K562 (cell line): ENCODE measurements at regions of chrX and their contacts with region 1.

Region 1: DNA sequence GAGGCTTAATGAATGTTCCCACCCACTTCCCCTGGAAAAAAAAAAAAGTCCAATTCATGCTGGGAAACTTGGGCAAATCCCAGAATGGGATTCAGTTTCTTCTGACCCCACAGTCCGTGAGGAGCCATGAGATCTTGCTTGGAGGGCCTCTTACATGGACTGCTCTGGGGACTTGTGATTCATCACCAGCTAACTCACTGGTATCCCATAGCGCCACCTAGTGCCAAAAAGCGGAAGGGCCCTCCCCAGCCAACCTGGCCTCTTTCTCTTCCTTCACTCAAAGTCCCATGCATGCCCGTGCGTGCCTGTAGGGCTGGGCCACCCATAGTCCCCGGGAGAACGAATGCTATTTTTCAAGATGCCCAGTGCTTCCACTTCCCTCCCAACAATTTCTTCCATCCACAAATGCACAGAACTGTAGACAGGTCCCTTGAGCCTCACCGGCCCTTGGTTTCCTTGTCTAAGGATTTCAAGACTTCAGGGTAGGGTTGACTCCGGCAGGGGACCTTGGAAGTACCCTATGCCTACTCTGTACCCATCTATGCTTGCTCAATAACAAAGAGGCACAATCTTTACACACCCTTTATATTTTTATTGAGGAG is 5.1 kb downstream of the RTL5 start:
- DNase-seq: peak; percentile 73 to 78 (median 76)
- ATAC-seq: peak; percentile 95
- H3K4me3 ChIP-seq: no peak overlapping the region
- H3K27ac ChIP-seq: no peak overlapping the region
- H3K4me1 ChIP-seq: peaks cover 0 to 5% of the 10 kb centered on the region in 2 experiments; a peak in 2 of 5 replicates
- H3K27me3 ChIP-seq: peaks cover 0 to 30% of the 10 kb centered on the region in 2 experiments; a peak in 3 of 5 replicates
- CTCF ChIP-seq: peak; percentile 68 to 82 (median 81)
- EP300 ChIP-seq: no peak
- POLR2A ChIP-seq: no peak
- RAD21 ChIP-seq: peak; percentile 42 to 72

Region 2: GRCh38 chrX:71998836-71999509 is 127.7 kb before region 1 on chrX:
- CTCF ChIA-PET with region 1: no interaction called
- POLR2A ChIA-PET with region 1: no interaction called
- in situ Hi-C with region 1: no loop called
- intact Hi-C with region 1: loop called (anchors 1 kb)
- DNase-seq: peak; percentile 28 to 45 (median 40)
- ATAC-seq: peak; percentile 84
- H3K4me3 ChIP-seq: no peak overlapping the region
- H3K27ac ChIP-seq: no peak overlapping the region
- H3K4me1 ChIP-seq: no peaks in the 10 kb centered on the region
- H3K27me3 ChIP-seq: peaks cover 0 to 4% of the 10 kb centered on the region in 2 experiments; a peak in 1 of 5 replicates
- CTCF ChIP-seq: peak; percentile 49 to 69 (median 60); a peak in 5 of 6 replicates
- EP300 ChIP-seq: no peak
- POLR2A ChIP-seq: no peak
- RAD21 ChIP-seq: peak in 1 of 2 experiments; percentile 41; a peak in 1 of 4 replicates

Region 3: DNA sequence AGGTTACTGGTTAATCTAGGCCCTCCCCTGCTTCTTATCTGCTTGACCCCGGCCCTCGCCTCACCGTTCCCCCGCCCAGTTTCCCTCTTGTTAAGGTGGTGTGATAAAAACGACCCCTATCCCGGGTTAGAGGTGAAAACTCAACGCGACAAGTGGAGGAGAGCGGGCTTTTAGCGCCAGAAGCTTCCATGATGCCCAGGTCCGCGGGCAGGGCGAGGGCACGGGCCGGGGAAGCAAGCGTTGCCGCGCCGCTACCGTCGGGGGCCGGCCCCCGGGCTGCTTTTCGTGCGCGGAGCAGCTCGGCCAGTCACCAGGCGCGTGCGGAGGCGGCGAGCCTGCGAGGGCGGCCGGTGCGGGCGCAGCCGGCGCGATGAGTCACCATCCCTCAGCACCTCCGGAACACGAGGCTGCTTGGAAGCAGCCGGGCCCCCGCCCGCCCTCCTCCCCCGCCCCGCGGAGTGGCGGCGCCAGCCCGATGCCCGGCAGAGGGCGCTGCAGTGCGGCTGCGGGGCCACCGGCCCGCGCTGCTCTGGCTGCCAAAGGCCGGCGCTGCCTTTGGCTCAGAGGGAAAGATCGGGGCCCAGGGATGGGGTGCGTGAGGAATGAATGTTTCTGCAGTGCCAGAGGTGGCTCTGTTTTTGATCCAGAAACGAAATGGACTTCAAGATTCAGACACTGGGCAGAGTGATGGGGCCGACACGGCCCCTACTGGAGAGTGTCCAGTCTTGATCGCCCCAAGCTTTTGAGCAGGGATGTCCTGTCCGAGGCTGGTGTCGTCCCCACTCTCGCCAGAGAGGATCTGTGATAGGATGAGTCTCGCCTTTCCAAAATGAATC is 108.1 kb before region 1 on chrX:
- CTCF ChIA-PET with region 1: interaction called, 8 read pairs
- POLR2A ChIA-PET with region 1: interaction called, 4 read pairs
- in situ Hi-C with region 1: no loop called
- intact Hi-C with region 1: loop called (anchors 2 kb)
- DNase-seq: peak; percentile 85 to 92 (median 90)
- ATAC-seq: peak; percentile 99
- H3K4me3 ChIP-seq: no peak overlapping the region
- H3K27ac ChIP-seq: no peak overlapping the region
- H3K4me1 ChIP-seq: peaks cover 0 to 9% of the 10 kb centered on the region in 2 experiments; a peak in 3 of 5 replicates
- H3K27me3 ChIP-seq: peaks cover 0 to 4% of the 10 kb centered on the region in 2 experiments; a peak in 2 of 5 replicates
- CTCF ChIP-seq: peak; percentile 47 to 87 (median 60); a peak in 5 of 6 replicates
- EP300 ChIP-seq: peak; percentile 43; the same call in 1 of the 2 replicates
- POLR2A ChIP-seq: no peak
- RAD21 ChIP-seq: peak; percentile 41 to 51; a peak in 3 of 4 replicates

Region 4: GRCh38 chrX:72100824-72101351 is 25.8 kb before region 1 on chrX:
- CTCF ChIA-PET with region 1: no interaction called
- POLR2A ChIA-PET with region 1: no interaction called
- in situ Hi-C with region 1: no loop called
- intact Hi-C with region 1: no loop called
- DNase-seq: no peak
- ATAC-seq: peak; percentile 42; the same call in 2 of the 3 replicates
- H3K4me3 ChIP-seq: no peak overlapping the region
- H3K27ac ChIP-seq: no peak overlapping the region
- H3K4me1 ChIP-seq: peaks cover 0 to 5% of the 10 kb centered on the region in 2 experiments; a peak in 1 of 5 replicates
- H3K27me3 ChIP-seq: peaks cover 0 to 34% of the 10 kb centered on the region in 2 experiments; a peak in 2 of 5 replicates
- CTCF ChIP-seq: no peak
- EP300 ChIP-seq: no peak
- POLR2A ChIP-seq: no peak
- RAD21 ChIP-seq: no peak